ENCODE measurements at regions of chrX and their contacts with region 1.

Region 1: GRCh38 chrX:130268500-130269170 is at the start of gene ZNF280C:
- DNase-seq: peak; percentile 85
- H3K4me3 Mint-ChIP-seq: peak within 1 kb of the TSS; percentile 92
- H3K27ac Mint-ChIP-seq: peak within 1 kb of the TSS; percentile 91
- H3K4me1 Mint-ChIP-seq: peaks cover 19% of the 10 kb centered on the region
- H3K27me3 Mint-ChIP-seq: peaks cover 2% of the 10 kb centered on the region
- total RNA-seq, gene ZNF280C: 7.4 and 7.6 TPM in 2 replicates

Region 2: GRCh38 chrX:129905787-129906580 is 362.7 kb before region 1 on chrX and contains the start of gene UTP14A:
- intact Hi-C with region 1: loop called (anchors 5 kb)
- DNase-seq: peak; percentile 81
- H3K4me3 Mint-ChIP-seq: peak within 1 kb of the TSS; percentile 96
- H3K27ac Mint-ChIP-seq: peak within 1 kb of the TSS; percentile 92
- H3K4me1 Mint-ChIP-seq: peaks cover 11% of the 10 kb centered on the region
- H3K27me3 Mint-ChIP-seq: no peaks in the 10 kb centered on the region
- total RNA-seq, gene UTP14A: 59.3 and 62.4 TPM in 2 replicates

Region 3: DNA sequence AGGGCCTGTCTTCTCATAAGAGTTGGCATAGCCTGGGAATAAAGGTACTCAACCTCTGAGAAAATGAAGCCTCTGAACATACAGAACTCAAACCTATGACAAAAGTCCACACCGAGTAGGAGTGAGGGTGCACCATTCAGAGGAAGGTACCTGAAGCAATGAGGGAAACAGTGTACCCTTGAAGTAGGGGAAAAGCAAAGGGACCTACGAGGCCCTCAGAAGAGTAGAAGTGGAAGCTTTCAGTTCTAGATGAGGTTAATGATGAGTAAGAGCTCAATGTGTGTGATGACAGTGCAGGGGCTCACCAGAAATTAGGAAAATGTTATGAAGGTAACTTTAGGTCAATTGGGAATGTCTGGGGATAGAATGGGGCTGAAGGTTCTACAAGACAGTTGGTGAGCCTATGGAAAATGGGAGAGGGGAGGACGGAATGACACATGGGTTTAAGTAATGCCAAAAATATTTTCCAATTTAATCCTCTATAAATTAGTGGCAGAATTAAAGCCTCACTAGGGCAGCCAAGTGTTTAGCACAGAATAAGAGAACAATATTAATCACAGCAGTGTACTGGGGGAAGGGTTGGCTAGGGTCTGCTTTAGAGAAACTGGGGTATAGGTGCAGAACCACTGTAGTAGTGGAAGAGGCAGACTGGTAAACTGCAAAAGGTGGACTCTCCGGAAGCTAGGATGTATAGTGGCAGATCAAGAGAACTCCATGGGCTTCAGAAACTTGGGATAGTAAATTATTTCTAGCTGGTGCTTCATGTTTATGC is 57.0 kb before region 1 on chrX:
- intact Hi-C with region 1: loop called (anchors 1 kb)
- DNase-seq: no peak
- H3K4me3 Mint-ChIP-seq: peak overlapping the region; percentile 68
- H3K27ac Mint-ChIP-seq: peak overlapping the region; percentile 94
- H3K4me1 Mint-ChIP-seq: peaks cover 21% of the 10 kb centered on the region
- H3K27me3 Mint-ChIP-seq: no peaks in the 10 kb centered on the region

Region 4: GRCh38 chrX:130224518-130225209 is 44.0 kb before region 1 on chrX:
- intact Hi-C with region 1: no loop called
- DNase-seq: no peak
- H3K4me3 Mint-ChIP-seq: no peak overlapping the region
- H3K27ac Mint-ChIP-seq: no peak overlapping the region
- H3K4me1 Mint-ChIP-seq: no peaks in the 10 kb centered on the region
- H3K27me3 Mint-ChIP-seq: no peaks in the 10 kb centered on the region

Region 5: GRCh38 chrX:130339408-130340222 is 71.0 kb after region 1 on chrX and contains the start of gene SLC25A14:
- intact Hi-C with region 1: loop called (anchors 1 kb)
- DNase-seq: peak; percentile 69
- H3K4me3 Mint-ChIP-seq: peak within 1 kb of the TSS; percentile 94
- H3K27ac Mint-ChIP-seq: peak within 1 kb of the TSS; percentile 96
- H3K4me1 Mint-ChIP-seq: peaks cover 15% of the 10 kb centered on the region
- H3K27me3 Mint-ChIP-seq: peaks cover 2% of the 10 kb centered on the region
- total RNA-seq, gene SLC25A14: 8.1 and 10.5 TPM in 2 replicates

Region 6: GRCh38 chrX:130902783-130903613 is 634.4 kb after region 1 on chrX and contains the start of gene ENOX2:
- intact Hi-C with region 1: loop called (anchors 1 kb)
- DNase-seq: peak; percentile 83
- H3K4me3 Mint-ChIP-seq: no peak within 1 kb of the TSS
- H3K27ac Mint-ChIP-seq: peak within 1 kb of the TSS; percentile 83
- H3K4me1 Mint-ChIP-seq: peaks cover 9% of the 10 kb centered on the region
- H3K27me3 Mint-ChIP-seq: peaks cover 5% of the 10 kb centered on the region
- total RNA-seq, gene ENOX2: 15.6 and 20.5 TPM in 2 replicates